ENCODE measurements at regions of chr12 and their contacts with region 1.

Region 1: DNA sequence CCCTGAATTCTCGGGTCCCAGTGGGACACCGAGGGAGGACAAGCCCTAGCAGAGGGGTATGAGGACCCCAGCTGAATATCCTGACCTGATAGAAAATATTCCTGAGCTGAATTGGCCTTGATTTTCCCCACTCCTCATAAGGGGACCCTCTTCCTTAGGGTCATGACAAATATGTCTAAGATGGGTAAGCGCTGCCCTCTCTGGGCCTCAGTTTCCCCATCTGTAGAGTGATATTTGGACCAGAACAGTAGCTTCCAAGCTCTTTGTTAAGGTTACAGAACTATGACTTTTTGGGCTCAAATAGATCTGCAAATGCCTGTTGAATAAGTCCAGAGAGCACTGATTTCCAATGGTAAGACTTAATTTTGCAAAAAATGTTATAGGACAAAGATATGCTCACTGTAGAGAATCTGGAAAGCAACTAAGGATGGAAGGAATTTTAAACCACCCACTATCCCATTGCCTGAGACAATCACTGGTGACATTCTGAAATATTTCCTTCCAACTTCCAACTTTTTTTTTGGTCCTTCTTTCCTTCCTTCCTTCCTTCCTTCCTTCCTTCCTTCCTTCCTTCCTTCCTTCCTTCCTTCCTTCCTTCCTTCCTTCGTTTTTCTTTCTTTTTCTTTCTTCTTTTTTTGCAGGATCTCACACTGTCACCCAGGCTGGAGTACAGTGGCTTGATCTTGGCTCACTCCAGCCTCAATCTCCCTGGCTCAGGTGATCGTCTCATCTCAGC is 32.0 kb downstream of the MYL2 start:
- DNase-seq: no peak
- H3K4me3 ChIP-seq: peak overlapping the region in 2 of 4 donors; percentile 52 to 53
- H3K27ac ChIP-seq: peak overlapping the region; percentile 59 to 76 (median 70)
- H3K4me1 ChIP-seq: no peaks in the 10 kb centered on the region
- H3K27me3 ChIP-seq: no peaks in the 10 kb centered on the region
- CTCF ChIP-seq: peak in 1 of 4 experiments; percentile 32
- EP300 ChIP-seq: no peak
- POLR2A ChIP-seq: no peak

Region 2: DNA sequence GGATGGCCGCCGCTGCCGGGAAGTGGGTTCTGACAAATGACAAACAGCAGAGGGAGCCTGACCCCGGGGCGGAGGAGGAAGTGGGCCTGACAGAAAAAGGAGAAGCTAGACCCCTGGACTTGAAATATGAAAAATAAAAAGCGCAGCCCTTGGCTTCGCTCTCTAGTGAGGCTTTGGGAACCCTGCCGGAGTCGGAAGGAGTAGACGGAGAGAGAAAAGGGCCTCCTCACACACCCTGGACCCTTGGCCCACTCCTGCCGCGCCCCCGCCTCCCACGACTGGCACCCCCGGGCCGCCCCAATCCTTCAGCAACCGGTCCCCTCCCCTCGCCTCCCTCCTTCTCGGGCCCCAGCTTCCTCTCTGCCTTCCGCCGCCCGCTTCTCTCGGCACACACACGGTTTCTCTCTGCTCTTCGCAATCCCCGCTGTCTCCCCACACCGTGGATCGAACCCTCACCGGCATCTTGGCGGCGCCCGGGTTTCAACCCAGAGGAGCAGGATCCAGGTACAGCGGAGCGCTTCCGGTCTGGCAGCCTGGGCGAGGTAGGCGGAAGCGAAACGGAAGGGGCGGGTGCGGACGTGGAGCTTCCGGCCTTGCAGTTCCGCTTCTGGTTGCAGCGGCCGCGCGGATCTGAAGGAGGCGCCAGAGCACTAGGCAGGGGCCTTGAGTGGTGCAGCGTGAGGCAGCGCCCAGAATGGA is 438.5 kb before region 1 on chr12 and contains the start of gene ARPC3:
- intact Hi-C with region 1: loop called (anchors 1 kb)
- DNase-seq: peak; percentile 97
- H3K4me3 ChIP-seq: peak within 1 kb of the TSS; percentile 76 to 90 (median 82)
- H3K27ac ChIP-seq: peak within 1 kb of the TSS; percentile 90 to 93 (median 90)
- H3K4me1 ChIP-seq: peaks cover 2 to 26% (median 20%) of the 10 kb centered on the region in 4 donors
- H3K27me3 ChIP-seq: no peaks in the 10 kb centered on the region
- CTCF ChIP-seq: peak; percentile 79 to 91 (median 86)
- EP300 ChIP-seq: no peak
- POLR2A ChIP-seq: peak; percentile 17 to 56
- total RNA-seq, gene ARPC3: 156 to 304 (median 231) TPM

Region 3: DNA sequence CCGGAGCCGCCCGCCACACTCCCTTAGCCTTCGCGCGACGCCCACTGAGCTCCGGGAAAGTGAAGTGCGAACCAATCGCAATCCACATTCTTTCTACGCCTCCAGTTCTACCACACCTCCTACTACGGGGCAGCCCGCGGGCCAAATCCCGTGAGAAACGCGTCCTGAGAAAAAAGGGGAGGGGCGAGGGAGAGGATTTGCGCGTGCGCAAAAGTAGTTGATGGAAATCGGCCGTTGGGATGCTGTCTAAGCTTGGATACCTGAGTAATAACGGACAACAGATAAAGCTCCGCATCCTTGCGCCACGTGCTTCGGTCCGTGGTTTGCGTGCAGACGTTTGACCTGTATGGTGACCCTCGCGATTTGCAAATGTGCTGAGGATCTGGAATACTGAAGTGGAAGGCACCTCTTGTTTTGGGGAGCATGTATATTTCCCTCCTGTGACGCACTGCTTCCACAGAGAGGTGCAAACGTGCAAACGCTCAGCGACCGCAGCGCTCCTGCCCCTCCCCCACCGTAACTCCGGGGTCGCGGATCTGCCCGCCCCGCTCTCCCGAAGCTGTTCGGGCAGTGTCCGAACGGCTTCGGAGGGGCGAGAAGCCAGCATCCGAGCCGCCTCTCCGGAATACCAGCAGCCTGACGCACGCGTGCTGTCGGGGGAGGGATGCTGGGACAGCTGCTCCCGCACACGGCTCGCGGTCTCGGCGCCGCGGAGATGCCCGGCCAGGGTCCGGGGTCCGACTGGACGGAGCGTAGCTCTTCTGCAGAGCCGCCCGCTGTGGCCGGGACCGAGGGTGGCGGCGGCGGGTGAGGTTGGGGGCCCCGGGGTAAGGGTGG is 420.0 kb before region 1 on chr12 and contains the starts of genes FAM216A and GPN3:
- intact Hi-C with region 1: loop called (anchors 5 kb)
- DNase-seq: peak; percentile 98
- H3K4me3 ChIP-seq: peak within 1 kb of the TSS; percentile 66 to 94 (median 78)
- H3K27ac ChIP-seq: peak within 1 kb of the TSS; percentile 96 to 99 (median 98)
- H3K4me1 ChIP-seq: peaks cover 0 to 35% (median 23%) of the 10 kb centered on the region in 4 donors
- H3K27me3 ChIP-seq: no peaks in the 10 kb centered on the region
- CTCF ChIP-seq: no peak
- EP300 ChIP-seq: peak in 1 of 4 donors; percentile 75
- POLR2A ChIP-seq: peak in 1 of 2 donors; percentile 48
- total RNA-seq, gene FAM216A: 7.5 to 13.0 (median 8.3) TPM
- total RNA-seq, gene GPN3: 16.1 to 22.8 (median 20.6) TPM

Region 4: GRCh38 chr12:110501752-110502738 is 386.4 kb before region 1 on chr12 and contains the starts of genes RAD9B and VPS29:
- intact Hi-C with region 1: loop called (anchors 10 kb)
- DNase-seq: peak; percentile 99
- H3K4me3 ChIP-seq: peak within 1 kb of the TSS; percentile 88 to 99 (median 98)
- H3K27ac ChIP-seq: peak within 1 kb of the TSS; percentile 92 to 96 (median 96)
- H3K4me1 ChIP-seq: peaks cover 0 to 43% (median 27%) of the 10 kb centered on the region in 4 donors
- H3K27me3 ChIP-seq: no peaks in the 10 kb centered on the region
- CTCF ChIP-seq: no peak
- EP300 ChIP-seq: peak in 1 of 4 donors; percentile 84
- POLR2A ChIP-seq: peak; percentile 91 to 92
- total RNA-seq, gene RAD9B: 0.41 to 0.71 (median 0.61) TPM
- total RNA-seq, gene VPS29: 120 to 209 (median 172) TPM

Region 5: GRCh38 chr12:110613771-110614684 is 274.4 kb before region 1 on chr12 and contains the start of gene TCTN1:
- intact Hi-C with region 1: loop called (anchors 5 kb)
- DNase-seq: peak; percentile 98
- H3K4me3 ChIP-seq: peak within 1 kb of the TSS; percentile 61 to 78 (median 68)
- H3K27ac ChIP-seq: peak within 1 kb of the TSS; percentile 70 to 79 (median 75)
- H3K4me1 ChIP-seq: peaks cover 0 to 10% (median 6%) of the 10 kb centered on the region in 4 donors
- H3K27me3 ChIP-seq: no peaks in the 10 kb centered on the region
- CTCF ChIP-seq: no peak
- EP300 ChIP-seq: peak in 1 of 4 donors; percentile 85
- POLR2A ChIP-seq: peak in 1 of 2 donors; percentile 9
- total RNA-seq, gene TCTN1: 34.6 to 38.6 (median 35.6) TPM

Region 6: DNA sequence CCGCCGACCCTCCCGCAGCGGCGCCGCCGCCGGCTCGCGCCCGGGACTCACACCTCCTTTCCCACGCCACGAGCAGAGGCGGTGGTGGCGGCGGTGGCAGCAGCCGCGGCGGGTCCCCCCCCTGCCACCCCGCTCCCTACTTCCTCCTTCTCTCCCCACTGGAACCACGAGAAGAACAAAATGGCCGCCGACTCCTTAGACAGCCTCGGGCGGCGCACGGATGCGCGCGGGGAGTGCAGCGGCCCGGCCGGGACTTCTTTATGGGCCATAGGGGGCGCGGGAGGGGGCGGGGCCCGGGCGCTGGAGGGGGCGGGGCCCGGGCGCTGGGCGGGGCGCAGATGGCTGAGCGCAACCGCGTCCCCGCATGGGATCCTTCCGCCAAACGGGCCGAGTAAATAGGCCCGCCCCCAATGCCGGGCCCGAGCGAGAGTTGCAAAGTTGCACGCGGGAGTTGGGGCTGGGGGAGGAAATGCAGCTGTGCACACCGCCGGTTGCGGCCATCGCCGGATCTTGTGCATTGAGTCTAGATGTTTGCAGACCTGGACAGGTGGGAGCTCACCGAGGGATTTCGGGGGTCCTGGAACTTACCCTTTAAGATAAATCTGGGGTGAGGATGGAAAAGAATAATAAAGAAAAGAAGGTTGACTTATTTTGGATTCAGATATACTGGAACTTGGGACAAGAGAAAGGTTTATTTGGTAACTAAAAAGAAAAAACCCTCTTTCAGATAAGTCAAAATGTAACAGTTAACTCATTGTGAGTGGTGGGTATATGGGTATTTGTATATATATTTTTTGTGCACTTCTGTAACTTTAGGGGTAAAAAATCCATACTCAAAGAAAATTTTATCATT is 145.5 kb before region 1 on chr12 and contains the start of gene PPP1CC:
- intact Hi-C with region 1: loop called (anchors 2 kb)
- DNase-seq: peak; percentile 97
- H3K4me3 ChIP-seq: peak within 1 kb of the TSS; percentile 86 to 94 (median 94)
- H3K27ac ChIP-seq: peak within 1 kb of the TSS; percentile 91 to 94 (median 94)
- H3K4me1 ChIP-seq: peaks cover 0 to 60% (median 44%) of the 10 kb centered on the region in 4 donors
- H3K27me3 ChIP-seq: no peaks in the 10 kb centered on the region
- CTCF ChIP-seq: no peak
- EP300 ChIP-seq: no peak
- POLR2A ChIP-seq: peak; percentile 68 to 81
- total RNA-seq, gene PPP1CC: 140 to 208 (median 171) TPM

Region 7: DNA sequence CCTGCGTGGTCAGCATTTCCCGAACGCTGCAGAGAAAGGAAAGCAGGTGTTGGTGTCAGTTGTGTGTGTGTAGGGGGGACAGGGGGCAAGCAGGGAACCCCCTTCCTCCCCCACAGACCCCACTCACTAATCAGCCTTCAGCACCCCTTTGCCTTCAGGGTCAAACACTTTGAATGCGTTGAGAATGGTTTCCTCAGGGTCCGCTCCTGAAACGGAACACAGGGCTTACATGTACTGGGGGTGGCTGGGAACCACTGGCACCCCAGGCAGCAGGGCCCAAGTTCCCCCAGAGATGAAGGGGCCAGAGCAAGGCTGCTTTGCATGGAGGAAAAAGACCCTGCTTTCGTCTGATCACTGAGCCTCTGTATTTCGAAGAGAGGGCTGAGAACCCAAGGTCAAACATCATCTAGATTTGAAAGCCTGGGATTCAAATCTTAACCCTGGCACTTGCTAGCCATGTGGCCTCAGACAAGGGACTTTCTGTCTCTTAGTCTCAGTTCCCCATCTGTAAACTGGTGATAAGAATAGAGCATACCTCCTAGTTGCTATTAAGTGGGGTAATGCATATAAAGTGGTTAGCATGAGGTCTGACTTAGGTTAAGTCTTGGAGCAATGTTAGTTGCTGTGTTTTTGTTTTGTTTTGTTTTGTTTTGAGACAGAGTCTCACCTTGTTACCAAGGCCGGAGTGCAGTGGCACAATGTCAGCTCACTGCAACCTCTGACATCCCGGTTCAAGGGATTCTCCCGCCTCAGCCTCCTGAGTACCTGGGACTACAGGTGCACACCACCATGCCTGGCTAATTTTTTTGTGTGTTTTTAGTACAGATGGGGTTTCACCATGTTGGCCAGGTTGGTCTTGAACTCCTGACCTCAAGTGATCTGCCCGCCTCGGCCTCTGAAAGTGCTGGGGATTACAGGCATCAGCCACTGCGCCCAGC is 25.0 kb after region 1 on chr12:
- intact Hi-C with region 1: no loop called
- DNase-seq: no peak
- H3K4me3 ChIP-seq: no peak overlapping the region
- H3K27ac ChIP-seq: no peak overlapping the region
- H3K4me1 ChIP-seq: no peaks in the 10 kb centered on the region
- H3K27me3 ChIP-seq: peaks cover 0 to 7% (median 0%) of the 10 kb centered on the region in 3 donors
- CTCF ChIP-seq: no peak
- EP300 ChIP-seq: no peak
- POLR2A ChIP-seq: no peak

Region 8: DNA sequence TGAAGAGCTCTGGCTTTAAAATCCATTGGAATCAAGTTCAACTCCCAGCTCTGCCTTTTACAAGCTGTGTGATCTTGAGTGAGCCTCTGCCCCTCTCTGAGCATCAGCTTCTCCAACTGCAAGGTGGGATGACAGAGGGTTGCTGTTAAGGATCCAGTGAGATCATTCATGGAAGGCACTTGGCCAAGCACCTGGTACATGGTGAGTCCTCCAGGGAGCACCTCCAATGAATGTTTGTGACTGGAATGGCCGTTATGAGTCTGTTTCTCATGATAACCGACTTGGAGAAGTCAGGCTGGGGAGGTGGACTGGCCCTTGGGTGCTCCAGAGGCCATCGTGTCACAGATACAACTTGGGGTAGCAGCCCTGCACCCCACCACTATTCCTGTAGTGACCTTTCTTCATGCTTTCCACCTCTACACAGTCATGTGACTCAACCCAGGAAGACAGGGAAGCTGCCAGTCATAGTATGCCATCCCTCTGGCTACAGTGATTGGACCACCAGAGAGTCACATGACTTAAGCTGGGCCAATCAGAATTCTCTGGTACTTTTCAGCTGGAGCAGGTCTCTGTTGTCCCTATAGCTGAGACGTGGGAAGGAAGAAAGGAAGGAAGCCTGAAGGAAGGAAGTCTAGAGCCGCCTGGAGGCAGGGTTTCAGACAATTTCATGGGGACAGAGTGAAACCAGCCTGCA is 178.5 kb after region 1 on chr12:
- intact Hi-C with region 1: no loop called
- DNase-seq: no peak
- H3K4me3 ChIP-seq: no peak overlapping the region
- H3K27ac ChIP-seq: no peak overlapping the region
- H3K4me1 ChIP-seq: no peaks in the 10 kb centered on the region
- H3K27me3 ChIP-seq: peaks cover 0 to 5% (median 0%) of the 10 kb centered on the region in 3 donors
- CTCF ChIP-seq: no peak
- EP300 ChIP-seq: no peak
- POLR2A ChIP-seq: no peak

Measured in sigmoid colon (tissue), 7 donors.